Activated B cell treated with CpG ODN at 0.5 μM for 24 hours (primary cell): ENCODE measurements at regions of chr9 and their contacts with region 1.

Region 1: DNA sequence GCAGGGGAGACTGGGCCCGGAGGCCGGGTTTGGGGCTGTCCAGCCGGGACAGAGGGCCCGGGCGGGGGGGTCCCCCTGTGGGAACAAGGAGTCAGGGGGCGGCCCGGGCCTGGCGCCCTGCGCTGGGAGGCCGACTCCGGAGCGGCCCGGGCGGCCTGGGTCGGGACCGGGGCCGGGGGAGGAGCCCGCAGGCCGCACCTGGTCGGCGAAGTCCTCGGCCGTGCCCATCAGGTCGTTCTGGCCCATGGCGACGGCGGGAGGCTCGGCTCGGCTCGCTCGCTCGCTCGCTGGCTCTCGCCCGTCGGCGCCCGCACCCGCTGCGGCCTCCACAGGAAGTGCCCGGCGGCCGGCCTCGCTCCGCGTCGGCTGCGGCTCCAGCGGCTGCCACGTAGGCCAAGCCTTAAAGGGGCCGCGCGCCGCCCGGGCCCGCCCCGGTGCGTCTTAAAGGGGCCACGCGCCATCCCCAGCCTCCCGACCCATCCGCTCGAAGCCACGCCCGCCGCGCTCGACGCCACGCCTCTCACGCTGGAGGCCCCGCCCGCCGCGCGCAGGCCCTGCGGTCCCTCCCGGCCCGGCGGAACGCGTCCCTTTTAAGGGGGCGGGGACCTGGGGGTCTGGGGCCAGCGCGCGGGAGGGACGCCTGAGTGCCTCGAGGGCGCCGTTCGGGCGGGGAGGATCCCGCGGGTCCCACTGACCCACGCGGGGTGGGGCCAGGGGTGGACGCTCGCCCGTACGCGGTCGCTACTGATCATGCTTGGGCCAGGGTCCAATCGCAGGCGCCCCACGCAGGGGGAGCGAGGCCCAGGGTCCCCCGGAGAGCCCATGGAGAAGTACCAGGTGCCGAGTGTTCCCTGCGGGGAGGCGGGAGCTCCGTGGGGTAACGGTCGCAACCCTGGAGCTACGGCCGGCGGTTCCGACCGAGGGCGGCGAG is at the starts of genes STKLD1 and SURF4:
- DNase-seq: peak; percentile 99
- ATAC-seq: peak; percentile 96
- H3K4me3 Mint-ChIP-seq: peak within 1 kb of the TSS; percentile 91
- H3K27ac Mint-ChIP-seq: peak within 1 kb of the TSS; percentile 74
- H3K4me1 Mint-ChIP-seq: peaks cover 39% of the 10 kb centered on the region
- H3K27me3 Mint-ChIP-seq: no peaks in the 10 kb centered on the region
- CTCF ChIP-seq: no peak
- total RNA-seq, gene STKLD1: 0.37 and 0.44 TPM in 2 replicates
- total RNA-seq, gene SURF4: 57.0 and 58.2 TPM in 2 replicates

Region 2: GRCh38 chr9:133347985-133348717 is 27.8 kb before region 1 on chr9 and contains the starts of genes MED22 and RPL7A:
- CTCF ChIA-PET with region 1: interaction called, 3 read pairs
- POLR2A ChIA-PET with region 1: interaction called, 17 read pairs
- intact Hi-C with region 1: loop called (anchors 1 kb)
- DNase-seq: peak; percentile 82
- ATAC-seq: peak; percentile 83
- H3K4me3 Mint-ChIP-seq: peak within 1 kb of the TSS; percentile 99
- H3K27ac Mint-ChIP-seq: peak within 1 kb of the TSS; percentile 96
- H3K4me1 Mint-ChIP-seq: peaks cover 45% of the 10 kb centered on the region
- H3K27me3 Mint-ChIP-seq: no peaks in the 10 kb centered on the region
- CTCF ChIP-seq: no peak
- total RNA-seq, gene MED22: 40.7 and 45.7 TPM in 2 replicates
- total RNA-seq, gene RPL7A: 3,786 and 4,134 TPM in 2 replicates

Region 3: DNA sequence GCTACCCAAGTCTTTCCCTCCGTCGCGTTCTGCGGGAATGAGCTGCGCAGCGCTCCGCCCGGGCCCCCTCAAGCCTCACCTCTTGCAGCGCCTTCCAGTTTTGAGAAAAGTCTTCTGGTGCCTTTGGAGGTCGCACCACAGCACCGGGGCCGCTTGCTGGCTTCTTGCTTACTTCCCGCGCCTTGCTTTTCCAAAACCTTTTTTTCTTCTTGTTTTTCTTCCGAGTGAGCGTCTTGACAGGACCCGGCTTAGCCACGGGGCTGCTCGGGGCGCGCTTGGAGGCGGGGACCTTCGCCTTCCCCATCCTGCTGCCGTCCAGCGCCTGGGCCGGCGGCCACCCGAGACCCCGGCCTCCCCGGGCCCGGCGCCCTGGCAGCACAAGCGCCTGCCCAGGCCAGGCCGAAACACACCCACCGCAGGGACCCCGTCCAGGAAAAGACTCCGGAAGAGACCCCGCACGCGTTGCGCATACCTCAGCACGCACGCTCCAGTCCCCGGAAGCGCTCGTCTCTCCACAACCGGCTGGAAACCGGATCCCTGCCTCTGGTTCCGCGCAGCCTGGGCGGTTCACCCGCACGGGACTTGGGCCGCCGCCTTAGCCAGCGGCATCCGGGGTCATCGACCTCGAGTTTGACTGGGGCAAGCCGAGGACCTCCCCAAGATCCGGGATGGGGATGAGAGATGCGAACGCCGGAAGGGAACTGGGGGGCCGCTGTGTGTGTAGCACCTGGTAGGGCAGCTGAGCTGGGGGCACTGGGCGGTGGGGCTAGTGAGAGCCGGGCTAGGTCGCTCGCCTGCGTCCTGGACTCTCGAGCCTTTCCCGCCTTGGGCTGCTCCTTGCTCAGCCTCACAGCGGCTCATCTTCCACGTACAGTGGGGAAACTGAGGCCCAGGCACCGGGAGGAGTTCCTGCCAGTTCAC is 41.8 kb after region 1 on chr9 and contains the start of gene REXO4:
- CTCF ChIA-PET with region 1: no interaction called
- POLR2A ChIA-PET with region 1: interaction called, 5 read pairs
- intact Hi-C with region 1: loop called (anchors 1 kb)
- DNase-seq: peak; percentile 86
- ATAC-seq: peak; percentile 84
- H3K4me3 Mint-ChIP-seq: peak within 1 kb of the TSS; percentile 90
- H3K27ac Mint-ChIP-seq: peak within 1 kb of the TSS; percentile 91
- H3K4me1 Mint-ChIP-seq: peaks cover 71% of the 10 kb centered on the region
- H3K27me3 Mint-ChIP-seq: no peaks in the 10 kb centered on the region
- CTCF ChIP-seq: no peak
- total RNA-seq, gene REXO4: 31.6 and 33.3 TPM in 2 replicates

Region 4: GRCh38 chr9:134024828-134025605 is 649.0 kb after region 1 on chr9 and contains the start of gene BRD3OS:
- CTCF ChIA-PET with region 1: no interaction called
- POLR2A ChIA-PET with region 1: no interaction called
- intact Hi-C with region 1: loop called (anchors 10 kb)
- DNase-seq: peak; percentile 85
- ATAC-seq: peak; percentile 94
- H3K4me3 Mint-ChIP-seq: peak within 1 kb of the TSS; percentile 83
- H3K27ac Mint-ChIP-seq: peak within 1 kb of the TSS; percentile 61
- H3K4me1 Mint-ChIP-seq: peaks cover 16% of the 10 kb centered on the region
- H3K27me3 Mint-ChIP-seq: no peaks in the 10 kb centered on the region
- CTCF ChIP-seq: no peak
- total RNA-seq, gene BRD3OS: 17.3 and 19.3 TPM in 2 replicates